ENCODE measurements at regions of chr6 and their contacts with region 1.

Region 1: GRCh38 chr6:20334334-20334733 is 67.3 kb upstream of the E2F3 start:
- DNase-seq: peak; percentile 16
- ATAC-seq: no peak
- H3K4me3 Mint-ChIP-seq: no peak overlapping the region
- H3K27ac Mint-ChIP-seq: no peak overlapping the region
- H3K4me1 Mint-ChIP-seq: peaks cover 24% of the 10 kb centered on the region
- H3K27me3 Mint-ChIP-seq: no peaks in the 10 kb centered on the region
- CTCF ChIP-seq: no peak

Region 2: GRCh38 chr6:20319520-20320357 is 14.6 kb before region 1 on chr6:
- CTCF ChIA-PET with region 1: interaction called, 4 read pairs
- POLR2A ChIA-PET with region 1: interaction called, 11 read pairs
- intact Hi-C with region 1: no loop called
- DNase-seq: peak; percentile 89
- ATAC-seq: peak; percentile 95
- H3K4me3 Mint-ChIP-seq: peak overlapping the region; percentile 75
- H3K27ac Mint-ChIP-seq: peak overlapping the region; percentile 94
- H3K4me1 Mint-ChIP-seq: peaks cover 14% of the 10 kb centered on the region
- H3K27me3 Mint-ChIP-seq: no peaks in the 10 kb centered on the region
- CTCF ChIP-seq: no peak